Activated CD4-positive, alpha-beta T cell treated with anti-CD3 and anti-CD28 coated beads for 36 hours (primary cell): ENCODE measurements at regions of chr10 and their contacts with region 1.

Region 1: GRCh38 chr10:11236234-11236633 is 218.6 kb downstream of the CELF2 start:
- DNase-seq: peak; percentile 57
- ATAC-seq: peak; percentile 52
- H3K4me3 Mint-ChIP-seq: peak overlapping the region; percentile 55
- H3K27ac Mint-ChIP-seq: peak overlapping the region; percentile 98
- H3K4me1 Mint-ChIP-seq: peaks cover 71% of the 10 kb centered on the region
- H3K27me3 Mint-ChIP-seq: no peaks in the 10 kb centered on the region

Region 2: DNA sequence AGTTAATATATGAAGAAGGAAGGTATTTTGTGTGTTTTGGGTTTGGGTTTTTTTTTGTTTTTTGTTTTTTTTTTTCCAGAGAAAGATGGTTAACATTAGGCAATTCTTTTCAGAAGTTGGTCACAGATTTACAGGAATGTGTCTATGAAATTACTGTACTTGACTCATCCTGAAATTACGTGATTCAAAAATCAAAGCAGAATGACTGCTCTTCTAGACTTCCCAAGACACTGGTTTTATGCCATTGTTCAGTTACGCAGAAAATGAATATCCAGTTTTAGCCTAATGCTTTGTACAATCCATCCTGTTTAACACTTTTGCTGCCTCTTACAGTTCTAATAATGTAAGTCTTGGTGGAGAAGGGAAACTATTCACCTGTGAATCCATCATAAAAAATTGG is 258.3 kb before region 1 on chr10:
- CTCF ChIA-PET with region 1: no interaction called
- POLR2A ChIA-PET with region 1: no interaction called
- intact Hi-C with region 1: loop called in 1 of 2 experiments (anchors 5 kb)
- DNase-seq: no peak
- ATAC-seq: peak; percentile 46
- H3K4me3 Mint-ChIP-seq: no peak overlapping the region
- H3K27ac Mint-ChIP-seq: no peak overlapping the region
- H3K4me1 Mint-ChIP-seq: peaks cover 33% of the 10 kb centered on the region
- H3K27me3 Mint-ChIP-seq: peaks cover 14% of the 10 kb centered on the region

Region 3: GRCh38 chr10:11170993-11171851 is 65.0 kb before region 1 on chr10:
- CTCF ChIA-PET with region 1: interaction called, 5 read pairs
- POLR2A ChIA-PET with region 1: interaction called, 4 read pairs
- intact Hi-C with region 1: loop called in 1 of 2 experiments (anchors 1 kb)
- DNase-seq: peak; percentile 80
- ATAC-seq: peak; percentile 49
- H3K4me3 Mint-ChIP-seq: no peak overlapping the region
- H3K27ac Mint-ChIP-seq: no peak overlapping the region
- H3K4me1 Mint-ChIP-seq: peaks cover 41% of the 10 kb centered on the region
- H3K27me3 Mint-ChIP-seq: no peaks in the 10 kb centered on the region

Region 4: GRCh38 chr10:11209830-11210181 is 26.4 kb before region 1 on chr10:
- CTCF ChIA-PET with region 1: interaction called, 7 read pairs
- POLR2A ChIA-PET with region 1: interaction called, 12 read pairs
- intact Hi-C with region 1: loop called (anchors 1 kb)
- DNase-seq: no peak
- ATAC-seq: peak; percentile 2
- H3K4me3 Mint-ChIP-seq: peak overlapping the region; percentile 63
- H3K27ac Mint-ChIP-seq: peak overlapping the region; percentile 97
- H3K4me1 Mint-ChIP-seq: peaks cover 99% of the 10 kb centered on the region
- H3K27me3 Mint-ChIP-seq: no peaks in the 10 kb centered on the region

Region 5: DNA sequence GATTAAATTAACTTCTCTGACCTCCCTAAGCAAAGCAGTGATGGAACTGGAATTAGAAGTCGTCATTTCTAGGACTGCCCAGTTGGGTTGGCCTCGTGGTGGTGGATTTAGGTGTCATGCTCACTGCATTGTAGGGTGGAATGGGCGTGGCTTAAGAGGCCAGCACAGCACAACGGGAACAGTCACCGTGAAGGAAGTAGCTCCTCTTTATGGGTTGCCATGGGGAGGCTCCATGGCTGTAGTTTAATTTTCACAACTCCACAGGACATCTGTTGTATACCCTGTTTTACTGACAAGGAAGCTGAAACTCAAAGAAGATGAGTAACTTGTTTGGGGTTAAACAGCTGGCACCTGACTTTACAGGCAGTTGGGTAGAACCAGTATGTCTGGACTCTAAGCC is 10.3 kb before region 1 on chr10:
- CTCF ChIA-PET with region 1: interaction called, 14 read pairs
- POLR2A ChIA-PET with region 1: interaction called, 33 read pairs
- intact Hi-C with region 1: loop called in 1 of 2 experiments (anchors 1 kb)
- DNase-seq: peak; percentile 85
- ATAC-seq: peak; percentile 80
- H3K4me3 Mint-ChIP-seq: peak overlapping the region; percentile 47
- H3K27ac Mint-ChIP-seq: peak overlapping the region; percentile 93
- H3K4me1 Mint-ChIP-seq: peaks cover 96% of the 10 kb centered on the region
- H3K27me3 Mint-ChIP-seq: no peaks in the 10 kb centered on the region

Region 6: DNA sequence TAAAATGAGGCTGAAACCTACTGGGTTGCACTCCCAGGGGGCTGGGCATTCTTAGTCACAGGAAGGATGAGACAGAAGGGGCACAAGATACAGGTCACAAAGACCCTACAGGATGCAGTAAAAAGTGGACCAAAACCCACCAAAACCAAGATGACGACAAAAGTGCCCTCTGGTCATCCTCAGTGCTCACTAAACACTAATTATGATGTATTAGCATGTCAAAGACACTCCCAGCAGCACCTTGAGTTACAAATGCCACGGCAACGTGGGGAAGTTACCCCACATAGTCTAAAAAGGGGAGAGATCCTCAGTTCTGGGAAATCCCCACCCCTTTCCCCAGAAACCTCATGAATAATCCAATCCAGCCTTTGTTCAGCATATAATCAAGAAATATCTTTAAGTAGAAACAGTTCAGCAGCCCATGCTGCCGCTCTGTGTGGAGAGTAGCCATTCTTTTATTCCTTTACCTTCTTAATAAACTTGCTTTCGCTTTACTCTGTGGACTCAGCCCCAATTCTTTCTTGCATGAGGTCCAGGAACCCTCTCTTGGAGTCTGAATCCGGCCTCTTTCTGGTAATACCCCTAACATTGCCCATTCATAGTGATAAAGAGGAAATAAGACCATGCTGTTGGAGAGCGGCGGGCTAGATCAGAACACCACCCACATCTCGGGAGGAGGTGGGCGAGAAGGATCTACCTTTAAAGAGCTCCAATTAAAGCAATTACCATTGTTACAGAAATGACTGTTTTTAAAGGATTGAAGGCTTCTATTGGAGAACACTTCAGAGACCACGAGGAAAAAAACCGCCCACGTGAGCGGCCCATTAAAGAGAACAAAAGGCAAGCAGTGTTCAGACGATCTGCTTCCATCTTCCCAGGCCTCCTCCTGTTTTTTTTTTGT is 204.3 kb after region 1 on chr10:
- CTCF ChIA-PET with region 1: no interaction called
- POLR2A ChIA-PET with region 1: no interaction called
- intact Hi-C with region 1: loop called (anchors 2 to 5 kb)
- DNase-seq: peak; percentile 75
- ATAC-seq: peak; percentile 86
- H3K4me3 Mint-ChIP-seq: peak overlapping the region; percentile 66
- H3K27ac Mint-ChIP-seq: peak overlapping the region; percentile 95
- H3K4me1 Mint-ChIP-seq: peaks cover 40% of the 10 kb centered on the region
- H3K27me3 Mint-ChIP-seq: no peaks in the 10 kb centered on the region

Region 7: DNA sequence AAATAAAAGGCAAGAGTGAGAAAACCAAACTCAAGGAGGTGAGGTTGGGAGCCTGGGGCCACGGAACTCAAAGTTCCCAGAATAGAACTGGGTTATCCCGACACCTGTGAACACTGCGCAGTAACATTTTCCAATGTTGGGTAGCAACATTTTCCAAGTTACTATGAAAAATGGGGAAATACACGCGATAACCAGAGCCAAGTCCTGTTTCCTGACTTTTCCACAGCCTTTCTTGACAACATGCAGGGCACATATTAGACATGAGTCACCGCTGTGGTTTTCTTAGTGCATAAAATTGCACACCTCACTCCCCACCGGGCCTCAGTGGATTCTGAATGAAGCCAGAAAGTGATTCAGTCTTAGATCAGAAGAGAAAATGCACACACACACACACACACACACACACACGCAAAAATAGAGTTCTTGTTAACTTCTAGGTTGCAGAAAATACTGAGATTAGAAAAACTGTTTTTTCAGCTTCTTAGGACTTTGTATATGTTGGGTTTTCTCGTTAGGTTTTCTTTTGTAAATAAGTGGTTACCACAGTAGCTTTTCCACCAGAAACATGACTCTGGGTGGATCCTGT is 1183.1 kb after region 1 on chr10:
- CTCF ChIA-PET with region 1: no interaction called
- POLR2A ChIA-PET with region 1: interaction called, 12 read pairs
- intact Hi-C with region 1: no loop called
- DNase-seq: peak; percentile 88
- ATAC-seq: peak; percentile 98
- H3K4me3 Mint-ChIP-seq: peak overlapping the region; percentile 30
- H3K27ac Mint-ChIP-seq: peak overlapping the region; percentile 73
- H3K4me1 Mint-ChIP-seq: peaks cover 36% of the 10 kb centered on the region
- H3K27me3 Mint-ChIP-seq: no peaks in the 10 kb centered on the region